Activated naive CD4-positive, alpha-beta T cell treated with anti-CD3 and anti-CD28 coated beads for 36 hours (primary cell): ENCODE measurements at regions of chr6 and their contacts with region 1.

Region 1: GRCh38 chr6:148177589-148178233 is 164.9 kb upstream of the SASH1 start:
- DNase-seq: peak; percentile 37
- H3K4me3 Mint-ChIP-seq: no peak overlapping the region
- H3K27ac Mint-ChIP-seq: no peak overlapping the region
- H3K4me1 Mint-ChIP-seq: no peaks in the 10 kb centered on the region
- H3K27me3 Mint-ChIP-seq: peaks cover 15% of the 10 kb centered on the region

Region 2: GRCh38 chr6:148166339-148166968 is 11.3 kb before region 1 on chr6:
- CTCF ChIA-PET with region 1: interaction called, 10 read pairs
- intact Hi-C with region 1: no loop called
- DNase-seq: no peak
- H3K4me3 Mint-ChIP-seq: no peak overlapping the region
- H3K27ac Mint-ChIP-seq: no peak overlapping the region
- H3K4me1 Mint-ChIP-seq: no peaks in the 10 kb centered on the region
- H3K27me3 Mint-ChIP-seq: no peaks in the 10 kb centered on the region

Region 3: DNA sequence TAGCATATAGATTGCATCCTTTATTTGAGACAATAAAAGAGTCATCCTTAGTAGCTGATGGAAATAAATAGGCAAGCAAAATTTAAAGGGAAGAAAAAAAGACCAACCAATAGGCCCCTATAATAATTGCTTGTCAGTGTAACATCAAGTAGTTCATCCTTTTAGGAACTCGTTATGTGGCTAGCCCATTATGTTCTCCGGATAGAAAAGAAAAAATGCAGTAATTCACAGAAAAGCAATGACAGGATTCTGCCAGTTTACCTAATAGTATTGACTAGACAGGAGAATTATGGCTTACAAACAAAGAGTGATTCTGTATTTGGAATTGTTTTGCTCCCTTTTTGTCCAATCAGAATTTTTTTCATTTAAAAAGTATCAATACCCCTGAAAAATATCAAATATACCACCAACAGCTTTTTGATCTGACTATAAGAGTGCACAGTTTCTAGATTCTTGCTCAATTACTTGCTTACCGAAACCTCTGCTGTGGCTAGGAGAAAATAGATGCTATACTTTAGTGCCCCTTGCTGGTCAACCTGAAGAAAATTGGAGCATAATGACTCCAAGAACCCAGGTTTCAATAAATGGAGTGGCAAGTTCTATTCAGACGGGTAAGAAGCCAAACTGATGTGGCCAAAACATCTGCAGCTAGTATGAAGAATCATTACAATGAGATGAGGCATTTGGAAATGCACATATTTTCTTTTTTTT is 73.4 kb after region 1 on chr6:
- CTCF ChIA-PET with region 1: interaction called, 14 read pairs
- intact Hi-C with region 1: loop called (anchors 1 kb)
- DNase-seq: no peak
- H3K4me3 Mint-ChIP-seq: no peak overlapping the region
- H3K27ac Mint-ChIP-seq: no peak overlapping the region
- H3K4me1 Mint-ChIP-seq: no peaks in the 10 kb centered on the region
- H3K27me3 Mint-ChIP-seq: peaks cover 7% of the 10 kb centered on the region

Region 4: DNA sequence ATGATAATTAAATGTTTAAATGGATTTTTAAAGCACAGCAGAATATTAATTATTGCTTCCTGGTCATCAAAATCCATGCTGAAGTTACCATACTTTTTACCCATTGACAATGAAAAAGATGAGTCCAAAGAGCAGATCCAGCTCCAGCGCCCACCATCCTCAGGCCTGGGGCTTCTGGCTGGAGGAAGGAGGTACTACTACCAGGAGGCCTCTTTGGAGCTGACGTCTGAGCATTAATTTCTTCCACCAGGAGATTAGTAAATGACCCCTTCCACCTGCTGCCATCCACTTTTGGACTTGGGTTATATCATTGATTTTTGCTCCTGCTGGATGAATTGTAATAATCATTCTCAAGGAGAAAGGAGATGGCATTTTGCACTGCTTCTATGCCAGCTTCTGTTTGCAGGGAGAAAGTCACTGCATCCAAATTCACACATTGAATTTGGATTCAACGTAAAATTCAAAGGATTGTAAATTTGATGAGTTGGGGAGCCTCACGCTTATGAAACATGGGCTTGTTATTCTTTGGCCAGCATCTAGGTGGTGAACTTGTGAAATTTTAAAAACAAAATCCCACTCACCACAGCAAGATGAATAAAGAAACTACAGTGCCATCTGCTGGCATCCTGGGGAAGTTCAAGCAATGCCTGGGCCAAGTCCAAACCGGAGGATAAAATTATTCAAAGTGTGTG is 286.8 kb after region 1 on chr6:
- CTCF ChIA-PET with region 1: interaction called, 19 read pairs
- intact Hi-C with region 1: loop called (anchors 1 kb)
- DNase-seq: peak; percentile 72
- H3K4me3 Mint-ChIP-seq: no peak overlapping the region
- H3K27ac Mint-ChIP-seq: no peak overlapping the region
- H3K4me1 Mint-ChIP-seq: no peaks in the 10 kb centered on the region
- H3K27me3 Mint-ChIP-seq: peaks cover 13% of the 10 kb centered on the region